IMR-90 (cell line): ENCODE measurements at regions of chr7 and their contacts with region 1.

Region 1: DNA sequence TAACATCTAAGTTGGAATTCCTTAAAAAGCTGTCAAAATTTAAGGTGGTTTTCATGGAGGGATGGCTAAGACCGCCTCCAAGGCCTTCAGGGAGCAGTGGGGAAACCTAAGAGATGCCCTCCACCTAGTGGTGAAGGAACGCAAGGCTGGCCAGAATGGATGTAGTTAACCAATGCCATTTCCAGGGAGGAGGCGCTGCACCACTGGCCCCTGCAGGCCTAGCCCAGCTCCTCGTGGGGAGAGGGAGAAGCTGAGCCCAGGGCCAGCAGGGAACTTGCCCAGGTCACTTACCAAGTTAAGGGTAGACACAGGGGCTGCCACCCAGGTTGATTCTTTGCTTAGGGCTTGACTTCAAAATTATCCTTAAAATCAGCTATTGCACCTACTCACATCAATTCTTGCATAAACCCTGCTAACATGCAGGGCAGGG is 32.0 kb downstream of the FIGNL1 start:
- DNase-seq: peak; percentile 75
- ATAC-seq: peak; percentile 100
- H3K4me3 ChIP-seq: no peak overlapping the region
- H3K27ac ChIP-seq: no peak overlapping the region
- H3K4me1 ChIP-seq: no peaks in the 10 kb centered on the region
- H3K27me3 ChIP-seq: peaks cover 3% of the 10 kb centered on the region
- CTCF ChIP-seq: peak; percentile 90
- POLR2A ChIP-seq: no peak
- RAD21 ChIP-seq: peak; percentile 68

Region 2: GRCh38 chr7:50092579-50093491 is 325.3 kb before region 1 on chr7 and contains the start of gene ZPBP:
- CTCF ChIA-PET with region 1: no interaction called
- POLR2A ChIA-PET with region 1: no interaction called
- dilution Hi-C with region 1: no loop called
- in situ Hi-C with region 1: no loop called
- intact Hi-C with region 1: loop called (anchors 1 kb)
- DNase-seq: peak; percentile 4
- ATAC-seq: no peak
- H3K4me3 ChIP-seq: no peak within 1 kb of the TSS
- H3K27ac ChIP-seq: no peak within 1 kb of the TSS
- H3K4me1 ChIP-seq: no peaks in the 10 kb centered on the region
- H3K27me3 ChIP-seq: no peaks in the 10 kb centered on the region
- CTCF ChIP-seq: peak; percentile 62
- POLR2A ChIP-seq: no peak
- RAD21 ChIP-seq: peak; percentile 61
- total RNA-seq, gene ZPBP: not detected in 2 replicates

Region 3: DNA sequence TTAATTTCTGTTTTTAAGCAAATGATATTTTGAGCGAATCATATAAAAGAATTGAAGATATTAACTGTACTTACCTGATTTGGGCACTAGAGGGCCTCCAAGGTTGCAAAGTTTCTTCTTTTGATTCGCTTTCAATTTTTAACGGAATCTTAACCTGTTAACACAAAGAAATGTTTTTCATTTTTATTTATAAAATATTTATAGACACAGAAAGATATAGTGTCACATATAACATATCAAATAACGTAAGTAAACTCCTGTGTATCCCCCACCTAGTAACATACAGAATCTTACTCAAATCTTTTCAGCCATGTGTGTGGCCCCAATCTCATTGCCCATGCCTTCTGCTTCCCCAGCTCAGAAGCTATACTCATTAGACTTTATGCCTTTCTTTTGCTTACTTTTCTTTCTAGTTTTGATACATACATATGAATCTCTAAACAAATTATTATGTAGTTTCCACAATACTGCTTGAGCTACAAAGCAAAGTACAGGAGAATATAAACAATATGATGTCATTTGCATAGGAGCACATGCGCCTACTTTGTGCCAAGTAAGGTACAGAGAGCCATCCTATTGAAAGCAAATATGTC is 275.6 kb before region 1 on chr7:
- CTCF ChIA-PET with region 1: interaction called, 4 read pairs
- POLR2A ChIA-PET with region 1: no interaction called
- dilution Hi-C with region 1: no loop called
- in situ Hi-C with region 1: no loop called
- intact Hi-C with region 1: loop called (anchors 1 kb)
- DNase-seq: peak; percentile 21
- ATAC-seq: peak; percentile 60; the same call in 1 of the 2 replicates
- H3K4me3 ChIP-seq: no peak overlapping the region
- H3K27ac ChIP-seq: no peak overlapping the region
- H3K4me1 ChIP-seq: no peaks in the 10 kb centered on the region
- H3K27me3 ChIP-seq: no peaks in the 10 kb centered on the region
- CTCF ChIP-seq: peak; percentile 63
- POLR2A ChIP-seq: no peak
- RAD21 ChIP-seq: peak; percentile 48

Region 4: DNA sequence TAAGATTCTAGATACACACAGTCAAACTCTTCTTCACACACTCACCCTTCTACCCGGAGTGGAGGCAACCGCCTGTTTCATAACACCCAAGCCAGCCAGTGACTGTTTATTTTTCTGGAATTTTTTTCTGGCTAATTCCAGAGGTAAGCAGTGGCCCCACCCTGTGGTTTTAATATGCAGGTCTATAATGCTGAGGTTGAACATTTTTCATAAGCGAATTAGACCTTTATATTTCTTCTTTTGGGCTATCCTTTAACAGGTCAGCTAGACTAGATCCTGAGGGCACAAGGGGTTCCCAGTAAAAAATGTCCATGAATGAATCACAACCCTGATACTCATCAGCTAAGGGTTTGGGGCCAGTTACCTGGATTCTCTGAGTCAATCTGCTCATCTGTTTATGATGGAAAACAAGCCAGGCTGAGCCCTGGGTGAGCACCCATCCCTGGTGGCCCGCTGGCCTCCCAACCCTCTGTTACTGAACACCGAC is 288.4 kb after region 1 on chr7:
- CTCF ChIA-PET with region 1: no interaction called
- POLR2A ChIA-PET with region 1: no interaction called
- dilution Hi-C with region 1: no loop called
- in situ Hi-C with region 1: no loop called
- intact Hi-C with region 1: no loop called
- DNase-seq: no peak
- ATAC-seq: peak; percentile 32; the same call in 1 of the 2 replicates
- H3K4me3 ChIP-seq: no peak overlapping the region
- H3K27ac ChIP-seq: no peak overlapping the region
- H3K4me1 ChIP-seq: peaks cover 4% of the 10 kb centered on the region; the same call in 1 of the 2 replicates
- H3K27me3 ChIP-seq: no peaks in the 10 kb centered on the region
- CTCF ChIP-seq: no peak
- POLR2A ChIP-seq: no peak
- RAD21 ChIP-seq: no peak

Region 5: DNA sequence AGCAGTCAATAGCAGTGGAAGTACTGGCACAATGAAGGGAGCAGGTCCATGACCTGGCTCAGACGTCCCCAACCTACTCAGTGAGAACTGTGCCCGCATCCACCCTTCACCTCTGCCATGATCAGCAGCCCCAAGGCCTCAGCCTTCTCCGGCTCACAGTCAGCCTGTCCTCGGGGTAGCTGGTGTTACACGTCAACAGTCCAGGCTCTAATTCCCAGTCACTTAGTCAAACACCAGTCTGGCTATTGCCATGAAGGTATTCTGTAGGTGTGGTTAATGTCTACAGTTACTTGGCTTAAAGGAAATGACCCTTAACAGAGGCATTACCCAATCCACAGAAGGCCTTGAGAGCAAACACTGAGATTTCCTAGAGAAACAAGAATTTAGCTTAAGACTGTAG is 315.5 kb after region 1 on chr7:
- CTCF ChIA-PET with region 1: no interaction called
- POLR2A ChIA-PET with region 1: no interaction called
- dilution Hi-C with region 1: no loop called
- in situ Hi-C with region 1: no loop called
- intact Hi-C with region 1: no loop called
- DNase-seq: peak; percentile 61
- ATAC-seq: peak; percentile 67
- H3K4me3 ChIP-seq: no peak overlapping the region
- H3K27ac ChIP-seq: no peak overlapping the region
- H3K4me1 ChIP-seq: peaks cover 15% of the 10 kb centered on the region
- H3K27me3 ChIP-seq: no peaks in the 10 kb centered on the region
- CTCF ChIP-seq: no peak
- POLR2A ChIP-seq: no peak
- RAD21 ChIP-seq: no peak